K562 (cell line): ENCODE measurements at regions of chr22 and their contacts with region 1.

Region 1: GRCh38 chr22:46250035-46250782 is at the start of gene CDPF1:
- DNase-seq: peak; percentile 88 to 90 (median 89)
- ATAC-seq: peak; percentile 95
- H3K4me3 ChIP-seq: peak within 1 kb of the TSS; percentile 71
- H3K27ac ChIP-seq: peak within 1 kb of the TSS; percentile 87
- H3K4me1 ChIP-seq: peaks cover 12 to 40% of the 10 kb centered on the region in 2 experiments
- H3K27me3 ChIP-seq: no peaks in the 10 kb centered on the region
- CTCF ChIP-seq: peak in 2 of 3 experiments; percentile 13 to 34; a peak in 3 of 6 replicates
- EP300 ChIP-seq: no peak
- POLR2A ChIP-seq: peak; percentile 82
- RAD21 ChIP-seq: peak in 1 of 2 experiments; percentile 30; a peak in 2 of 4 replicates
- polyA plus RNA-seq, gene CDPF1: 0.84 to 3.2 TPM

Region 2: GRCh38 chr22:46150034-46150654 is 100.1 kb before region 1 on chr22 and contains the start of gene PPARA:
- CTCF ChIA-PET with region 1: no interaction called
- POLR2A ChIA-PET with region 1: no interaction called
- in situ Hi-C with region 1: loop called (anchors 10 kb)
- intact Hi-C with region 1: loop called (anchors 10 kb)
- DNase-seq: peak; percentile 77 to 97 (median 96)
- ATAC-seq: peak; percentile 89
- H3K4me3 ChIP-seq: peak within 1 kb of the TSS; percentile 59
- H3K27ac ChIP-seq: peak within 1 kb of the TSS; percentile 19; the same call in 1 of the 3 replicates
- H3K4me1 ChIP-seq: peaks cover 6 to 32% of the 10 kb centered on the region in 2 experiments; a peak in 4 of 5 replicates
- H3K27me3 ChIP-seq: peaks cover 9 to 38% of the 10 kb centered on the region in 2 experiments; a peak in 4 of 5 replicates
- CTCF ChIP-seq: no peak
- EP300 ChIP-seq: no peak
- POLR2A ChIP-seq: no peak
- RAD21 ChIP-seq: no peak
- polyA plus RNA-seq, gene PPARA: 0.64 to 0.87 TPM

Region 3: GRCh38 chr22:46234969-46235368 is 15.2 kb before region 1 on chr22:
- CTCF ChIA-PET with region 1: no interaction called
- POLR2A ChIA-PET with region 1: interaction called, 10 read pairs
- in situ Hi-C with region 1: no loop called
- intact Hi-C with region 1: no loop called
- DNase-seq: peak; percentile 72 to 81 (median 74)
- ATAC-seq: peak; percentile 88
- H3K4me3 ChIP-seq: no peak overlapping the region
- H3K27ac ChIP-seq: peak overlapping the region; percentile 65
- H3K4me1 ChIP-seq: peaks cover 24 to 27% of the 10 kb centered on the region in 2 experiments; a peak in 4 of 5 replicates
- H3K27me3 ChIP-seq: no peaks in the 10 kb centered on the region
- CTCF ChIP-seq: no peak
- EP300 ChIP-seq: peak; percentile 46; the same call in 1 of the 2 replicates
- POLR2A ChIP-seq: no peak
- RAD21 ChIP-seq: no peak

Region 4: GRCh38 chr22:46267431-46268279 is 17.4 kb after region 1 on chr22 and contains the start of gene TTC38:
- CTCF ChIA-PET with region 1: no interaction called
- POLR2A ChIA-PET with region 1: interaction called, 12 read pairs
- in situ Hi-C with region 1: no loop called
- intact Hi-C with region 1: no loop called
- DNase-seq: peak; percentile 89 to 93 (median 91)
- ATAC-seq: peak; percentile 98
- H3K4me3 ChIP-seq: peak within 1 kb of the TSS; percentile 90
- H3K27ac ChIP-seq: peak within 1 kb of the TSS; percentile 69
- H3K4me1 ChIP-seq: peaks cover 0 to 24% of the 10 kb centered on the region in 2 experiments; a peak in 4 of 5 replicates
- H3K27me3 ChIP-seq: no peaks in the 10 kb centered on the region
- CTCF ChIP-seq: no peak
- EP300 ChIP-seq: no peak
- POLR2A ChIP-seq: peak; percentile 75
- RAD21 ChIP-seq: no peak
- polyA plus RNA-seq, gene TTC38: 0.84 to 2.5 TPM